HEK293T (cell line): ENCODE measurements at regions of chr6 and their contacts with region 1.

Region 1: GRCh38 chr6:100099189-100100074 is 105.4 kb upstream of the MCHR2 start:
- DNase-seq: no peak

Region 2: DNA sequence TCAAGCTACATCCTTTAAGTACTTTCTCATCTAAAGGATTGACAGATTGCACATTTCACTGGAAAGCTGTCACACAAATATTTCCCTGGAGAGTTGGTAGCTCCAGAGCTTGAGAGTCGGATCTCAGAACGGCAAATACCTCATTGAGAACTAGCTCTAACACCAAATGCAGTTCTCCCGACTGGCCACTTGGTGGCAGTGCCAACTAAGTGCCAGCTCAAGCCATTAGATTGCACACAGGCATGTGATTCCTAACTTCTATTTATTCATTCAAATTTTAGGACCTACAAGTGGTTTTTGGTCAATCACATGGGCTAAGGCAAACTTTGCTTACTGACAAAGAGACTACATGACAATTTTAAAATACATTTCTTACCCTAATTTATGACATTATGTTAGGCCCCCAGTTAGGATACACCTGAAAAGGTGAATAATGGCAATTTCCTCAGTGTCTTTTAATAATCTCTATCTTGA is 97.5 kb before region 1 on chr6:
- CTCF ChIA-PET with region 1: interaction called, 17 read pairs
- POLR2A ChIA-PET with region 1: no interaction called
- DNase-seq: peak; percentile 68

Region 3: DNA sequence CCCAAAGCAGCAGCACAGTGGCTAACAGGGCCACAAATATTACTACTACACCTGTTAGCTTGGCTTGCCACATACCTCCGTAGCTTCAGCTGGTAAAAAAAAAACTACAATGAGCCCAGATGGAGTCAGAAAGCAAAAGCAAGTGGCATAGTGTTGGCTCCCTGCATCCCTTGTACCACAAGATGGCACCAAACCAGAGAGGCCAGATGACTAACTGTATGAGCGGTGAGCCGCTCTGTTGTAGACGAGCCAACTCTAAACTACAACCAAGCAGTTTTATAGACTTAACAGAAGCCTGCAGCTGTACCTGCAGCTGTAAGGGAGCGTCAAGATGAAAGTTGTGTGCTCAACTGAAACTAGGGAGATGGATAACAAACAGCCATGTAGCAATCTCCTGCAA is 20.9 kb before region 1 on chr6:
- CTCF ChIA-PET with region 1: no interaction called
- POLR2A ChIA-PET with region 1: no interaction called
- DNase-seq: no peak

Region 4: DNA sequence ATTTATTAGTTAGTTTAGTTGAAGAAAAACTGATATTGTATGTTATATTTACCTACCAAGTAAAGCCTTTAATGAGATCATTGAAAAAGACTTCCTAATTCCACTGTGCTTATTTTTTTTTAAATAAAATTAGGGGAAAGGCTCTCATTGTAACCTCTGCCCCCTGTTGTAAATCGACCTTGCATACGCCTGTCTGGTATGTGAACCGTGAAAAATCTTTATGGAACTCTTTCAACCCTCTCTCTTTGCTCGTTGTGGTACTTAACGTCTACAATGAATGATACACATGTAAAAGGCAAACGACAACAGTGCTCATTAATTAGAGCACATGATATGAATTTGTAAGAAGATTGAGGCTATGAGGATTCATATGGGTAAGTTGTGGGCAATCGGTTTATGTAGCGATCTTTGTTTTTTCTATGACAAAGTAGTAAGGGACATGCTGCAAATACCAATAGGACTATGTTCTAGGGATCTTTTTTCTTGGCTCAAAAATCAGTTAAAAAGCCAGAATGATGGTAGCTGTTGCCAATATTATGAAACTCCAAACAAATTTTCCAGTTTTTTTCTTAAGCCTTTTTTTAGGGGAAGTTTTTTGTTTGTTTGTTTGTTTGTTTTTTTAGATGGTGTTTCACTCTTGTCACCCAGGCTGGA is 13.6 kb after region 1 on chr6:
- CTCF ChIA-PET with region 1: no interaction called
- POLR2A ChIA-PET with region 1: no interaction called
- DNase-seq: no peak